Activated T-helper 1 cell treated with anti-CD3 and anti-CD28 coated beads, Interleukin-12 subunit alpha, Interleukin-12 subunit beta, Interleukin-2, Interleukin-4 antibody, amounts not matched to agents 30 ng/mL and 10 ng/mL and 1 ng/mL, durations not matched to agents 14 hours and 24 hours and 36 hours (primary cell): ENCODE measurements at regions of chr18 and their contacts with region 1.

Region 1: DNA sequence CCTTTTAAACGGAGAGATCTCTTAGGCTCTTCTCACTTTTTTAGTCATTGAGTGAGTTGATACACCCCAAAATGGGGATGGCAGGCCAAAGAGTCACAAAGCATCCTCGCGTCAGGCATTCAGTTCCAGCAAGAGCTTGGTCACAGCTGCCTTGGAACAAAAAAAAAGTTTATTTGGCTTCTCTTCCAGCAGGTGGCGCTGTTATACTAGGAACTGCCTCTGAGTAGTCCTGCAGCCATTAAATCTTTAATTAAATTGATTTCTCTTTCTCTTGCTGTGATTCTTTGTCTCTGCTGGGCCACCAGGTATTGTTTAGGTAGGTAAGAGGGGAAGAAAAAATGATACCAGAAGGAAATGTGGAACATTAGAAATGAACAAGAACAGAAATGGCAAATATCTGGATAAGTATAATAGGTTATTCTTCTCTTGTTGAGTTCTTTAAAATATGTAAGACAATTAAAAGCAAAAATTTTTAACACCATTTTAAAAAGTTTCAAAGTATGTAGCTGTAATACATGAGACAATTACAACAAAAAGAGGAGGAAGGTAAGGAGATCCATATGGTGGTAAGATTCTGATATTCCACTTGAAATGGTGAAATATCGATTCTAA is 175.1 kb downstream of the GALNT1 start:
- DNase-seq: peak; percentile 38
- H3K4me3 Mint-ChIP-seq: no peak overlapping the region
- H3K27ac Mint-ChIP-seq: no peak overlapping the region
- H3K4me1 Mint-ChIP-seq: no peaks in the 10 kb centered on the region
- H3K27me3 Mint-ChIP-seq: peaks cover 10% of the 10 kb centered on the region

Region 2: GRCh38 chr18:35588995-35589394 is 167.6 kb before region 1 on chr18:
- intact Hi-C with region 1: loop called (anchors 2 kb)
- DNase-seq: no peak
- H3K4me3 Mint-ChIP-seq: no peak overlapping the region
- H3K27ac Mint-ChIP-seq: no peak overlapping the region
- H3K4me1 Mint-ChIP-seq: peaks cover 28% of the 10 kb centered on the region
- H3K27me3 Mint-ChIP-seq: no peaks in the 10 kb centered on the region

Region 3: DNA sequence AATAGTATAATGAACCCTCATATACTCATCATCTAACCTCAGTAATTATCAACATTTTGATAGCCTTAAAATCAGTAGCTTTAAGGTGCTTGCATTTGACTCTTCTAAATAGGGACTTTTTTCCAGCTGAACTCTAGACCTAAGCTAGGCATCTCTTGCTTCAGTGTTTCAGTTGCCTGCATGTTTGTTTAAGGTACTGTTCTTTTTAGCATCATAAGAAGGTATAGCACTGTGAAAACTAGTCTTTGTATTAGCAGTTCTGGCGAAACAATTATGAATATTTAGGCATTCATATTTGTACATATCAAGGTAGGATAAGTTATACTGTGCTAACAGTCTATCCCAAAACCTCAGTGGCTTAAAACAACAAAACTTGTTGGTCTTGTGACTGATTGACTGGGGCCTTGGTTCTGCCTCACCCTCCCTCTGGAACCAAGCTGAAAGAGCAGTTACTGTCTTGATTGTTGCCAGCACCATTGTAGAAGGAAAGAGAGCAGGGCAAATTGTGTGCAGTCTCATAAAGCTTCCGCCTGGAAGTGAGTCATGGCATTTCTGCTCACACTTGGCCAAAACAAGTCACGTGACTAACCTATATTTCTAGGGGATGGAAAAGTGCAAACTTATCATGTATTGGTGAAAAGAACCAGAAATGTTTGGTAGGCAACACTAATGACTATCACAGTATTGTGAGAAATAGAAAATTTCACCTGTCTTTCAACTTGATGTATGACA is 150.8 kb before region 1 on chr18:
- intact Hi-C with region 1: no loop called
- DNase-seq: no peak
- H3K4me3 Mint-ChIP-seq: no peak overlapping the region
- H3K27ac Mint-ChIP-seq: no peak overlapping the region
- H3K4me1 Mint-ChIP-seq: no peaks in the 10 kb centered on the region
- H3K27me3 Mint-ChIP-seq: no peaks in the 10 kb centered on the region

Region 4: DNA sequence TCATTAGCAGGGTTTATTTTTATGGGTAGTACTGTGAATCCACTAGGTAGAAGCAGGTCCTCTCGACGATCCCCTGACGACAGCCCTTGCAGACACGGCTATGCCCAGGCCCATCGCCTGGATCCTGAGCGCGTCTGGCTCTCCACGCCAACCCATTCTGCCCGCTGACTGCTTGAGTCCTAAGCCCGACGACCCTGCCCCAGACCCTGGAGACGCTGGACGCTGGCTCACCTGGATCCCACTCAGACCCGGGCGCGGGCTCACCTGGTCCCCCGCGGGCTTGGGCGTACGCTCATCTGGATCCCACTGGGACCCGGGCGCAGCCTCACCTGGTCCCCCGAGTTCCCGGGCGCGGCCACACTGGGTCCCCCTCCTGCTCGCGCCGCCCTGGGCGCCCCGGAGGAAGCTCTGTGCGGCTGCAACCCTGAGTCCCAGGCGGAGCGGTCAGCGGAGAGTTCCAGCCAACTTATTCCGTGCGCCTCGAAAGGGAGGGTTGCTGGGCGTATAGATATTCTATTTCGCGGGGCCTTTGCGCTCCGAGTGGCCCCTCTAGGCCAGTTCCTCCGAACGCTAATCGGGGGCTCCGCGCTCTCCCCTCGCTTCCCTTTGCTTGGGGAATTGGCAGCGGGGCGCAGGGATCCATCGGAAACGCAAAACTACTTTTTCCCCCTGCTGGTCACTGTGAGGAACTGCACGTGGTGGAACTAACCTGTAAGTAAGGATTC is 193.5 kb after region 1 on chr18:
- intact Hi-C with region 1: loop called (anchors 1 kb)
- DNase-seq: peak; percentile 42
- H3K4me3 Mint-ChIP-seq: peak overlapping the region; percentile 83
- H3K27ac Mint-ChIP-seq: no peak overlapping the region
- H3K4me1 Mint-ChIP-seq: peaks cover 11% of the 10 kb centered on the region
- H3K27me3 Mint-ChIP-seq: peaks cover 14% of the 10 kb centered on the region

Region 5: DNA sequence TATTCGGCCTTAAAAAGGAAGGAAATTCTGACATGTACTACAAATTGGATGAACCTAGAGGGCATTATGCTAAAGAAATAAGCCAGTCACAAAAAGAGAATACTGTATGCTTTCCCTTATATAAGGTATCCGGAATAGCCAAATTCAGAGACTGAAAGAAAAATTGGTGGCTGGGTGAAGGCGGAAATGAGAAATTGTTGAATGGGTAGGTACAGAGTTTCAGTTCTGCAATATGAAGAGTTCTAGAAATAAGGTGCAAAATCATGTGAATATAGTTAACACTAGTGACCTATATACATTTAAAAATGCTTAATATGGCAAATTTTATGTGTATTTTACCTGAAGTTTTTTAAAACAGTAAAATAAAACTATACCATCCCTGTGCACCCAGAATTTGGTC is 259.0 kb after region 1 on chr18:
- intact Hi-C with region 1: loop called (anchors 1 kb)
- DNase-seq: no peak
- H3K4me3 Mint-ChIP-seq: no peak overlapping the region
- H3K27ac Mint-ChIP-seq: no peak overlapping the region
- H3K4me1 Mint-ChIP-seq: no peaks in the 10 kb centered on the region
- H3K27me3 Mint-ChIP-seq: no peaks in the 10 kb centered on the region

Region 6: DNA sequence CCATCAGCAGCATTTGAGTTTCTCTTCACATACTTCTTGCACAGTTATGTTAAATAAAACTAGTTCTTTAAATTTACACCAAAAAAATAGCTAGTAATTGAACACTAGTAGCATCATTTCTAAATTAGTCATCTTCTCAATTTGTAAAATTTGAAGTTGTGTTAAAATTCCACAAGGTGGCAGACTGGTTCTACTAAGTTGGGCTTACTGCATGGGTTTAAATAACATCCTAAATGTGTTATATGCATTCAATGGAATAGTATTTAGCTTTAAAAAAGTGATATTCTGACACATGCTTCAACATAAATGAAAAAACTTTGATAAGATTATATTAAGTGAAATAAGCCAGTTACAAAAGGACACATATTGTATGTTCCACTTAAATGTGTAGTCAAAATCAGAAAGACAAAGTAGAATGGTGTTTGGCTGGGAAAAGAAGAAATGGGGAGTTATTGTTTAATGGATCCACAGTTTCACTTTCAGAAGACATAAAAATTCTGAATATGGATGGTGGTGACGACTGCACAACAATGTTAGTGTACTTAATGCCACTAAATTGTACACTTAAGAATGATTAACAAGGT is 339.4 kb after region 1 on chr18:
- intact Hi-C with region 1: loop called (anchors 2 kb)
- DNase-seq: no peak
- H3K4me3 Mint-ChIP-seq: no peak overlapping the region
- H3K27ac Mint-ChIP-seq: no peak overlapping the region
- H3K4me1 Mint-ChIP-seq: peaks cover 7% of the 10 kb centered on the region
- H3K27me3 Mint-ChIP-seq: peaks cover 14% of the 10 kb centered on the region

Region 7: GRCh38 chr18:36284671-36285295 is 528.2 kb after region 1 on chr18:
- intact Hi-C with region 1: loop called (anchors 1 kb)
- DNase-seq: peak; percentile 19
- H3K4me3 Mint-ChIP-seq: no peak overlapping the region
- H3K27ac Mint-ChIP-seq: no peak overlapping the region
- H3K4me1 Mint-ChIP-seq: no peaks in the 10 kb centered on the region
- H3K27me3 Mint-ChIP-seq: peaks cover 15% of the 10 kb centered on the region

Region 8: GRCh38 chr18:36572135-36572856 is 815.7 kb after region 1 on chr18:
- intact Hi-C with region 1: loop called (anchors 10 kb)
- DNase-seq: no peak
- H3K4me3 Mint-ChIP-seq: no peak overlapping the region
- H3K27ac Mint-ChIP-seq: no peak overlapping the region
- H3K4me1 Mint-ChIP-seq: no peaks in the 10 kb centered on the region
- H3K27me3 Mint-ChIP-seq: peaks cover 16% of the 10 kb centered on the region